ENCODE measurements at regions of chr7 and their contacts with region 1.

Region 1: GRCh38 chr7:106736508-106737201 is 75.7 kb upstream of the CCDC71L start:
- H3K4me3 Mint-ChIP-seq: peak overlapping the region; percentile 18
- H3K27ac Mint-ChIP-seq: no peak overlapping the region
- H3K4me1 Mint-ChIP-seq: peaks cover 23% of the 10 kb centered on the region
- H3K27me3 Mint-ChIP-seq: peaks cover 7% of the 10 kb centered on the region

Region 2: GRCh38 chr7:106176414-106177299 is 560.0 kb before region 1 on chr7:
- intact Hi-C with region 1: loop called (anchors 2 kb)
- H3K4me3 Mint-ChIP-seq: peak overlapping the region; percentile 26
- H3K27ac Mint-ChIP-seq: no peak overlapping the region
- H3K4me1 Mint-ChIP-seq: peaks cover 9% of the 10 kb centered on the region
- H3K27me3 Mint-ChIP-seq: peaks cover 33% of the 10 kb centered on the region

Region 3: DNA sequence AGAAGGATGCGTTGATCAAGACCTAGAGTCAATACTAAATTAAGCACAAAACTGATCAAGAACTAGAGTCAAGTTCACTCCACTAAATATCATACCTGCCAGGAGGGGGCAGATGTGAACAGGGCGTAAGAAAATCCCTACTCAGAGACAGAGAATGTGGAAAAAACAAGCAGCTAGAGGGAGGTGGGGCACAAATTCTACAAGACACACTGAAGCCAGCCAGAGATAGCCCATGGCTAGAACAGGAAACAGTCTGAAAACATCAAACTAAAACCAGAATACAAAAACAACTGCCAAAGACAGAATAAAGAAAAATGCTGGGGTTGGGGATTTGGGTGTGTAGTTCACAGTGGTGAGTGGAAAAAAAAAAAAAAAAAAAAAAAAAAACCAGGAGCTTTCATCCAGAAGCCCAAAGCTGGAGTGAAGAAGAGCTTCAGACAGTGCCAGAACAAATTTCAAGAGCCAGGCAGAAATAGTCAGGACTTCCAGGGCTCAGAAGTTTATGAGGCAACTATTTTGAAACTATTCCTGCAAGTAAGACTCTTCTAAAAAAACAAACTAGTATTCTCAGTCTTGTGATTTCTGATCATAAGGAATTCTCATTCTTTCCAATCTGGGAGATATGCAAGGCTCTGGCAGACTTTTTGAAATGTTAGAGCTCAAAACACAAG is 194.0 kb before region 1 on chr7:
- intact Hi-C with region 1: loop called (anchors 1 kb)
- H3K4me3 Mint-ChIP-seq: no peak overlapping the region
- H3K27ac Mint-ChIP-seq: peak overlapping the region; percentile 30
- H3K4me1 Mint-ChIP-seq: peaks cover 6% of the 10 kb centered on the region
- H3K27me3 Mint-ChIP-seq: peaks cover 5% of the 10 kb centered on the region